Activated B cell treated with CpG ODN at 0.5 μM for 24 hours (primary cell): ENCODE measurements at regions of chr7 and their contacts with region 1.

Region 1: DNA sequence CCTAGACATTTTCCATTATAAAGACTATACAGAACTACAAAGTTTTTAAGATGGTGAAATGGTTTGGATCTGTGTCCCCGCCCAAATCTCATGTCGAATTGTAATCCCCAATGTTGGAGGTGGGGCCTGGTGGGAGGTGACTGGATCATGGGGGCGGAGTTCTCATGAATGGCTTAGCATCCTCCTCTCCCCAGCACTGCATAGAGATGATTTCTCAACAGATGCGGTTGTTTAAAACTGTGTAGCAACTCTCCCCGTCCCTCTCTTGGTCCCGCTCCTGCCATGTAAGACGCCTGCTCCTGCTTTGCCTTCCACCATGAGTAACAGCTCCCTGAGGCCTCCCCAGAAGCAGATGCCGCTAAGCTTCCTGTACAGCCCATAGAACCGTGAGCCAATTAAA is 1.6 kb downstream of the FAM133B start:
- DNase-seq: no peak
- ATAC-seq: no peak
- H3K4me3 Mint-ChIP-seq: peak overlapping the region; percentile 80
- H3K27ac Mint-ChIP-seq: peak overlapping the region; percentile 80
- H3K4me1 Mint-ChIP-seq: peaks cover 59% of the 10 kb centered on the region
- H3K27me3 Mint-ChIP-seq: no peaks in the 10 kb centered on the region
- CTCF ChIP-seq: no peak

Region 2: DNA sequence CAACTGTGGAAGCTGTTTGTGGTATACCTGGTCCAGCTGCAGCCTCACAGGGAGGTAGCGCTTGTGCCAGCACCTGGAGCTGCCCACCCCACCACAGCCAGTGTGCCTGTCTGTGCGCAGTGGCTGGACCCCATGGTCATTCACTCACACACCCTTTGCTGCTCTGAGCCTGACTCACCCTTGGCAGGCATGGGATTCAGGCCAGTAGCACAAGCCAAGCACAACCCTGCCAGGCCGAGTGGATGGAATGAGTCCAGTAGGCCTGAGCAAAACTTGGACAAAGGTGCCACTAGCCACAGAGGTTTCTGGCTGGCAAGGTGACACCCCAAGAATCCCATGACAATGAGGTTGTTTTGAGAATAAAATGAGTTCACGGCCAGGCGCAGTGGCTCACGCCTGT is 41.0 kb before region 1 on chr7:
- CTCF ChIA-PET with region 1: no interaction called
- POLR2A ChIA-PET with region 1: no interaction called
- intact Hi-C with region 1: no loop called
- DNase-seq: no peak
- ATAC-seq: no peak
- H3K4me3 Mint-ChIP-seq: no peak overlapping the region
- H3K27ac Mint-ChIP-seq: no peak overlapping the region
- H3K4me1 Mint-ChIP-seq: no peaks in the 10 kb centered on the region
- H3K27me3 Mint-ChIP-seq: peaks cover 4% of the 10 kb centered on the region
- CTCF ChIP-seq: no peak

Region 3: GRCh38 chr7:92609921-92610518 is 21.5 kb after region 1 on chr7:
- CTCF ChIA-PET with region 1: interaction called, 3 read pairs
- POLR2A ChIA-PET with region 1: interaction called, 4 read pairs
- intact Hi-C with region 1: loop called (anchors 2 kb)
- DNase-seq: no peak
- ATAC-seq: no peak
- H3K4me3 Mint-ChIP-seq: no peak overlapping the region
- H3K27ac Mint-ChIP-seq: no peak overlapping the region
- H3K4me1 Mint-ChIP-seq: no peaks in the 10 kb centered on the region
- H3K27me3 Mint-ChIP-seq: no peaks in the 10 kb centered on the region
- CTCF ChIP-seq: no peak

Region 4: DNA sequence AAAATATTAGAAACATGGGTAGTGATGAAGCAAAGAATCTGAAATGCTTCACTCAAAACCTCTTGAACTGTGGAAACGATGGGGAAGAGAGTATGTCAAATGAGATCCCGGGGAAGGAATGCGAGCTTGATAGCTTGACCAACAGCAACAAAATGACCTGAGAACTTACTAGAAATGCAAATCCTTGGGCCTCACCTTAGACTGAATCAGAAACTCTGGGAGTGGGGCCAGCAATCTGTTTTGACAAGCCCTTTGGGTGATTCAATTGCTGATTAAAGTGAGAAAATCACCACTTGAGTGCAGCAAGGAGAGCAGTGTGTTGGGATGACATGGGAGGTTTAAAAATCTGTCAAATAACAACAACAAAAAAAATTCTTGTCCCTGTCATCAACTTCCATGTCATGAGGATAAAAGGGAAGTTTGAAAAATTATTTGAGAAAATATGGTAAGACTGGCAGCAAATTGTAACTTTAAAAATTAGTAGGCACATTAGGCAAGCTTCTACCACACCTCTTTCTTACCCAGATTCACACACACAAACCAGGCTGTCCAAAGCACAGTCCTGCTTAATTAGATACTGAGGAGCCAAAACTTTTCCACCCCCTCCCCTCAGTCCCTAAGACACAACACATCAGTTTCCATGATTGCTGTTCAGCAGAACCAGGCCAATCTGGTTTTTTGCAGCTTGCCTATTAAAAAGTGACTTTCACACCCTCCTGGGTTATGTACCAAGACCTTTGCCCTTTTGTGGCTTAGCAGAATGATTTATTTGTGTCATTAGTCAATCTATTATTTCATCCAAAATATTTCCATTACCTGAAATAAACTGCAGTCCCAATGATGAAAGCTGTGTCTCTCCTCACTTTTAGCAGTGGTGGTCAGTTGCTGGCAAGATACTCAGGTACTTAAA is 970.4 kb after region 1 on chr7:
- CTCF ChIA-PET with region 1: no interaction called
- POLR2A ChIA-PET with region 1: no interaction called
- intact Hi-C with region 1: no loop called
- DNase-seq: no peak
- ATAC-seq: no peak
- H3K4me3 Mint-ChIP-seq: no peak overlapping the region
- H3K27ac Mint-ChIP-seq: peak overlapping the region; percentile 85
- H3K4me1 Mint-ChIP-seq: peaks cover 34% of the 10 kb centered on the region
- H3K27me3 Mint-ChIP-seq: no peaks in the 10 kb centered on the region
- CTCF ChIP-seq: no peak